Sigmoid colon (tissue), 7 donors: ENCODE measurements at regions of chr20 and their contacts with region 1.

Region 1: DNA sequence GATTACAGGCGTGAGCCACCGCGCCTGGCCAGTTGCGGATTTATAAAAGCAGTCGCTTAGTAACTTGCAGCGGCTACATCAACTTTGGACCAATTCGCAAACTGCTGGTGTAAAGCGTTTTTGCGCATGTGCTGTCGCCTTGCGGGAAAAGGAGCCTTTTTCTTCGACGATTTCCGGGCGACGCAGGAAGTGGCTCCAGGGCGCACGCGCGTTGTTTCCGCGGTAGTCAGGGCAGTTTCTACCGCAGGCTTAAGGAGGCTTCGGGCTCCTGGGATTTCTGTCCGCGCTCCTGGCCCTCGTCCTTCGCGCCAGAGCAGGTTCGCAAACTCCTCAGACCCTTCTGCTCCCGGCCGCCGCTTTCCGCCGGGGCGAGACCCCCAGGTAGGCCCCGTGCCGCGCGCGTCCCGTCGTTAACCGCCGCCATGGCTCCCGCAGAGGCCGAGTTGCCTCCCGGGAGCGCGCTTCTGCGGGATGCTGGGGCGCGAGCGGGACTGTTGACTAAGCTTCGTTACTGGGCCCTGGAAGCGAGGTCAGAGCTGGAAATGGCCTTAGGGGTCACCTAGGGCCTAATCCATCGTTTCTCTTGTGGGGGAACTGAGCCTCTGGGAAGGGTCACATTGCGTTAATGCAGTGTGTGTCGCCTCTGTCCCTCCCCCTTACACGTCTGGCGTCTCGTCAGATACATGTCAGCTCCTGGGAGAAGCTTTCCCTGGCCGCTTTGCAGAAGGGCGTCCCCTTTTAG is at the start of gene RAE1:
- DNase-seq: peak; percentile 95
- H3K4me3 ChIP-seq: peak within 1 kb of the TSS; percentile 83 to 93 (median 86)
- H3K27ac ChIP-seq: peak within 1 kb of the TSS; percentile 86 to 91 (median 88)
- H3K4me1 ChIP-seq: peaks cover 0 to 17% (median 13%) of the 10 kb centered on the region in 4 donors
- H3K27me3 ChIP-seq: peaks cover 0 to 3% (median 0%) of the 10 kb centered on the region in 3 donors
- CTCF ChIP-seq: no peak
- EP300 ChIP-seq: no peak
- POLR2A ChIP-seq: peak; percentile 28 to 50
- total RNA-seq, gene RAE1: 13.6 to 20.9 (median 17.1) TPM

Region 2: GRCh38 chr20:56554869-56555268 is 796.3 kb before region 1 on chr20:
- intact Hi-C with region 1: loop called (anchors 5 kb)
- DNase-seq: no peak
- H3K4me3 ChIP-seq: no peak overlapping the region
- H3K27ac ChIP-seq: no peak overlapping the region
- H3K4me1 ChIP-seq: peaks cover 0 to 9% (median 6%) of the 10 kb centered on the region in 4 donors
- H3K27me3 ChIP-seq: no peaks in the 10 kb centered on the region
- CTCF ChIP-seq: no peak
- EP300 ChIP-seq: no peak
- POLR2A ChIP-seq: no peak

Region 3: DNA sequence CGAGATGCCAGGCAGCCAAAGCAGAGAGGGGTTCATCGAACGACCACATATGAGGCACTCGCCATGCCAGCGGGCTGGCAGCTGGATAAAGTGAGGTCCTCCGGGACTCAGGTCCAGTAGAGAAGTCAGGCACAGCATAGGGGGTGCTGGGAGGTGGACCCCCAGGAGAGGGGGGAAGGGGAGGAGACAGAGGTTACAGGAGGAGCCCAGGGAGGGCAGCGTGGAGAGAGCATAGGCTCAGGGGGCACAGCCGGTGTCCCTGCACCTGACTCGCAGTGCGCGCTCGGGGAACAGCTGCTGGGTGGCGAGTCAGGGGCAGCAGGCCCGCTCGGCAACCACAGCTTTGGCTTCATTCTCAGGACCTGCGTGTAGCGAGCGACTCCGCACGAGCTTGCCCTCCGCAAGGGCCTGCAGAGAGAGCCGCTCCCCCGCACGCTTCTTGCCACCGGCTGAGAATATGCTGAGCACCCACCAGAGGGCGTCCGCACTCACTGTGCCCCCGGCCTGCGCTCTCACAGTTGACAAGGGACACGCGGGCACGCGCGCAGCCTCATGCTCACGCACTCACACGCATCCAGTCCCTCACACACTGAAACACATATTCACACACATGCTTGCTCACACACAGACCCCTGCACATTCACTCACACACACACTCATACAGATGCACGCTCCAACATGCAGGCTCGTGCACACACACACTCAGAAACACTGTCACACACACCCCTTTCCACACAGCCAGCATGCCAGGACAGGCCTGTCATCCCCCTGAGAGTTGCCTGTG is 259.2 kb before region 1 on chr20:
- intact Hi-C with region 1: loop called (anchors 1 kb)
- DNase-seq: peak; percentile 77
- H3K4me3 ChIP-seq: no peak overlapping the region
- H3K27ac ChIP-seq: no peak overlapping the region
- H3K4me1 ChIP-seq: peaks cover 0 to 9% (median 2%) of the 10 kb centered on the region in 4 donors
- H3K27me3 ChIP-seq: peaks cover 0 to 10% (median 5%) of the 10 kb centered on the region in 3 donors
- CTCF ChIP-seq: peak; percentile 48 to 80 (median 60)
- EP300 ChIP-seq: no peak
- POLR2A ChIP-seq: no peak

Region 4: GRCh38 chr20:57179265-57179664 is 171.9 kb before region 1 on chr20:
- intact Hi-C with region 1: no loop called
- DNase-seq: no peak
- H3K4me3 ChIP-seq: no peak overlapping the region
- H3K27ac ChIP-seq: no peak overlapping the region
- H3K4me1 ChIP-seq: no peaks in the 10 kb centered on the region
- H3K27me3 ChIP-seq: no peaks in the 10 kb centered on the region
- CTCF ChIP-seq: no peak
- EP300 ChIP-seq: no peak
- POLR2A ChIP-seq: no peak

Region 5: DNA sequence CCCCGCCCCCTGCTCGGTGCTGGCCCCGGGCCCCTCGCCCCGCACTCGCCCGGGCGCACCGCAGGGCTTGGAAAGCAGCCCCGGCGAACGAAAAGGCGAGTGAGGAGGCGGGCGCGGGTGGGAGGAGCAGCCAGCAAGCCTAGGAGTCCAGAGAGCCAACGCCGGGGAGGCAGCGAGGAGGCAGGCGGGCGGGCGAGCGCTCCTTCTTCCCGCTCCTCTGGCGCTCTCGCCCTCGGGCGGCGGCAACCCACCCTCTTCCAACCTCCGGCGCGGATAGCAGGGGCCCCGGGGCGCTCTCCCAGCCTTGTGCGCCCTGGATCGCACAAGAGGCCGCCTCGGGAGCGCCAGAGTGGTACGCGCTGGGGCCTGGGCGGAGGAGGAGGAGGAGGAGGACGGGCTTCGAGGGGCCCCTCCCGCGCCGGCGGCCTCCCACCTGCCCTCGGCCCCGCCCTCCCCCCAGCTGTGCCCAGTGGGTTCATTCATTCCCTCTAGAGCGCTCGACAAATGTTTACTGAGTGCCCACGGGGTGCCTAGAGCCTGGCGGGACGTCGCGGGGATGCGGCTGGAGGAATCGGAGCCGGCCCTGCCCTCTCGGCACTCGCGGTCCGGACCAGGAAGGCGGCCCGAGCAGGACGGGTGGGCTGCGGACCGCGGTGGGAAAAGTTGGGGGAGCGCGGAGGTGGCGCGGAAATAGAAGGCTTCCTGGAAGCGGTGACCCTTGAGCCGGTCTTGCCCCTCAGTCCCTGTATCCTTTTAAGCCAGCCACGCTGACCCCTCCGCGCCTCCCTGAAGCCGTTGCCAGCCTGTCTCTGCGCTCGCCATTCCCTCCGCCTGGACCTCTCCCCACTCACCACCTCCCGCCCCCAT is 84.7 kb before region 1 on chr20 and contains the start of gene BMP7:
- intact Hi-C with region 1: no loop called
- DNase-seq: no peak
- H3K4me3 ChIP-seq: peak within 1 kb of the TSS; percentile 15 to 47 (median 40)
- H3K27ac ChIP-seq: peak within 1 kb of the TSS in 2 of 4 donors; percentile 12 to 17
- H3K4me1 ChIP-seq: peaks cover 0 to 23% (median 22%) of the 10 kb centered on the region in 4 donors
- H3K27me3 ChIP-seq: peaks cover 33 to 71% (median 56%) of the 10 kb centered on the region in 3 donors
- CTCF ChIP-seq: no peak
- EP300 ChIP-seq: no peak
- POLR2A ChIP-seq: no peak
- total RNA-seq, gene BMP7: 1.5 to 5.4 (median 3.5) TPM

Region 6: GRCh38 chr20:57282670-57283361 is 68.4 kb before region 1 on chr20:
- intact Hi-C with region 1: loop called (anchors 10 kb)
- DNase-seq: no peak
- H3K4me3 ChIP-seq: no peak overlapping the region
- H3K27ac ChIP-seq: no peak overlapping the region
- H3K4me1 ChIP-seq: peaks cover 0 to 16% (median 5%) of the 10 kb centered on the region in 4 donors
- H3K27me3 ChIP-seq: no peaks in the 10 kb centered on the region
- CTCF ChIP-seq: no peak
- EP300 ChIP-seq: no peak
- POLR2A ChIP-seq: no peak

Region 7: GRCh38 chr20:57596998-57597939 is 246.1 kb after region 1 on chr20:
- intact Hi-C with region 1: loop called (anchors 10 kb)
- DNase-seq: peak; percentile 79
- H3K4me3 ChIP-seq: peak overlapping the region in 1 of 4 donors; percentile 20
- H3K27ac ChIP-seq: no peak overlapping the region
- H3K4me1 ChIP-seq: peaks cover 0 to 12% (median 8%) of the 10 kb centered on the region in 4 donors
- H3K27me3 ChIP-seq: peaks cover 0 to 7% (median 0%) of the 10 kb centered on the region in 3 donors
- CTCF ChIP-seq: peak; percentile 88 to 99 (median 91)
- EP300 ChIP-seq: no peak
- POLR2A ChIP-seq: no peak

Region 8: GRCh38 chr20:57718490-57719271 is 367.5 kb after region 1 on chr20:
- intact Hi-C with region 1: loop called (anchors 5 kb)
- DNase-seq: peak; percentile 99
- H3K4me3 ChIP-seq: peak overlapping the region in 3 of 4 donors; percentile 34 to 40 (median 37)
- H3K27ac ChIP-seq: peak overlapping the region; percentile 25 to 55 (median 34)
- H3K4me1 ChIP-seq: peaks cover 0 to 37% (median 17%) of the 10 kb centered on the region in 4 donors
- H3K27me3 ChIP-seq: no peaks in the 10 kb centered on the region
- CTCF ChIP-seq: no peak
- EP300 ChIP-seq: peak in 1 of 4 donors; percentile 50
- POLR2A ChIP-seq: no peak